Mammary epithelial cell (primary cell): ENCODE measurements at regions of chr17 and their contacts with region 1.

Region 1: DNA sequence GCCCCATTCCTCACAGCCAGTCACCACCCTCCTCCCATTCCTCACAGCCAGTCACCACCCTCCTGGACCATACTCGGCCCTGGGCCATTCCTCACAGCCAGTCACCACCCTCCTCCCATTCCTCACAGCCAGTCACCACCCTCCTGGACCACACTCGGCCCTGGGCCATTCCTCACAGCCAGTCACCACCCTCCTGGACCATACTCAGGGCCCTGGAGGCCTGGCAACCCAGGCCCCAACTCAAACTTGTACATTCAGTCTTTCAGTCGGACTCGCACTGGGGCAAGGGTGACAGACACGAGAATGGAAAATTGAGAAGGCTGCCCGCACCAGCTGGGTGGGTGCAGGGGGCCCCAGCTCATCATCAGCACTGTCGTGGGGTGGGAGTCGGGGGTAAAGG is 30.4 kb upstream of the FOXK2 start:
- DNase-seq: no peak
- H3K4me3 ChIP-seq: no peak overlapping the region
- H3K27ac ChIP-seq: no peak overlapping the region
- H3K4me1 ChIP-seq: peaks cover 8% of the 10 kb centered on the region
- H3K27me3 ChIP-seq: no peaks in the 10 kb centered on the region
- CTCF ChIP-seq: no peak

Region 2: GRCh38 chr17:82450170-82451106 is 38.7 kb before region 1 on chr17 and contains the start of gene CYBC1:
- CTCF ChIA-PET with region 1: no interaction called
- dilution Hi-C with region 1: loop called (anchors 5 kb)
- in situ Hi-C with region 1: no loop called
- intact Hi-C with region 1: no loop called
- DNase-seq: peak; percentile 84
- H3K4me3 ChIP-seq: peak within 1 kb of the TSS; percentile 87 to 98 (median 98)
- H3K27ac ChIP-seq: peak within 1 kb of the TSS; percentile 73
- H3K4me1 ChIP-seq: peaks cover 18% of the 10 kb centered on the region
- H3K27me3 ChIP-seq: no peaks in the 10 kb centered on the region
- CTCF ChIP-seq: no peak
- total RNA-seq, gene CYBC1: 21.8 to 38.3 TPM